CD4-positive, alpha-beta memory T cell (primary cell): ENCODE measurements at regions of chr5 and their contacts with region 1.

Region 1: DNA sequence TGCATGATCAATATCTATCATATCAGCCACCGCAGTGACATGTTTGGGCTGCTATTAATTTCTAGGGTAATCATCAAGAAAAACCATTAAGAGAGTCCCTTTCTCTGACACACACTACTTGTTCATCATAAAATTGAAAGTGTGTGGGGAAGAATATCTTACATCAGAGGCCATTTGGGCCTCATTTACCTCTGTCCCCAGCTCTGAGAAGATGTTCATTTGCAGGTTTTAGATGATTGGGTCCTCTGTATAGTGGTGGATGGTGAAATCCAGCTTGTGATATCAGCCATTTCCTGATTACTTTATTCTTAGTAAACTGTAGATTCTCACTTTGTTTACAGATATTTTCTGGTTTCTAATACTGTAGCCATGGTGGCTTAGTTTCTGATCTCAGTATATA is 29.8 kb upstream of the PJA2 start:
- DNase-seq: no peak
- H3K4me3 ChIP-seq: no peak overlapping the region
- H3K4me3 Mint-ChIP-seq: no peak overlapping the region
- H3K27ac ChIP-seq: no peak overlapping the region
- H3K27ac Mint-ChIP-seq: no peak overlapping the region
- H3K4me1 ChIP-seq: no peaks in the 10 kb centered on the region
- H3K4me1 Mint-ChIP-seq: no peaks in the 10 kb centered on the region
- H3K27me3 ChIP-seq: no peaks in the 10 kb centered on the region
- H3K27me3 Mint-ChIP-seq: no peaks in the 10 kb centered on the region

Region 2: DNA sequence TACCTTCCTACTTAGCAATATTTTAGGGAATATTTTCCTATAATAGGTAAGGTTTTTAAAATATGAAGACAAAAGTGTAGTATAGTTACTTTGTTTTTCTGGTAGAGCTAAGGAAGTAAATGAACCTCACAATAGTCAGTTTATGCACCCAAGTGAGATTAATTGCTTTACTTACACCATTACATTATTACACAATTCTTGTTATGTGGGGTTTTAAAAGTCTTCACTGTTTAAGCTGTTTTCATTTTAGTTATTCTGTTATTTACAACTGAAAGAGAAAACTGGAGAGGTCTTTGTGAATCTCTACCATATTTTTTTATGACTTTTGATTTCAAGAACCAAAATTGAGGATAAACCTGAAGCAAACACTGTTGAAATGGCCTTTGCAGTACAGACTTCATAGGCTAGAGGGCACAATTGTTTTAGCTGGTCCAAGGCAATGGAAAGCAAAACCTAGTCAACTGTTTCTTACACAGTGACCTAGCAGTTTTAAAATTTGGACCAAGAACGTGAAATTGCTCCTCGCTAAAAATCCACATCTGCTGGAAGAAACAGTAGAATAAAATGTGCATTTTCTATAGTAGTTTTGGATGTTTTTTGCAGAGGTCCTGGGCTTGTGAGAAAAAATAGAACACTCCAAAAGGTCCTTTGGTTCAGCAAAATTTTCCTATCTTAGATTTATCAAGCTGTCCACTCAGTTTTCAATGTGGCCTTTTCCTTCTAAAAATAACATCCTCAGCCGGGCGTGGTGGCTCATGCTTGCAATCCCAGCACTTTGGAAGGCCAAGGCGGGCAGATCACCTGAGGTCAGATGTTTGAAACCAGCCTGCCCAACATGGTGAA is 758.3 kb before region 1 on chr5:
- CTCF ChIA-PET with region 1: no interaction called
- POLR2A ChIA-PET with region 1: no interaction called
- intact Hi-C with region 1: loop called (anchors 1 kb)
- DNase-seq: peak; percentile 27 to 47 (median 43)
- H3K4me3 ChIP-seq: no peak overlapping the region
- H3K4me3 Mint-ChIP-seq: no peak overlapping the region
- H3K27ac ChIP-seq: no peak overlapping the region
- H3K27ac Mint-ChIP-seq: no peak overlapping the region
- H3K4me1 ChIP-seq: no peaks in the 10 kb centered on the region
- H3K4me1 Mint-ChIP-seq: no peaks in the 10 kb centered on the region
- H3K27me3 ChIP-seq: no peaks in the 10 kb centered on the region
- H3K27me3 Mint-ChIP-seq: peaks cover 4 to 11% of the 10 kb centered on the region in 2 donors

Region 3: GRCh38 chr5:109053995-109054417 is 385.6 kb before region 1 on chr5:
- CTCF ChIA-PET with region 1: no interaction called
- POLR2A ChIA-PET with region 1: no interaction called
- intact Hi-C with region 1: loop called (anchors 10 kb)
- DNase-seq: no peak
- H3K4me3 ChIP-seq: no peak overlapping the region
- H3K4me3 Mint-ChIP-seq: no peak overlapping the region
- H3K27ac ChIP-seq: no peak overlapping the region
- H3K27ac Mint-ChIP-seq: peak overlapping the region in 1 of 7 donors; percentile 3
- H3K4me1 ChIP-seq: no peaks in the 10 kb centered on the region
- H3K4me1 Mint-ChIP-seq: peaks cover 0 to 1% (median 0%) of the 10 kb centered on the region in 4 donors
- H3K27me3 ChIP-seq: no peaks in the 10 kb centered on the region
- H3K27me3 Mint-ChIP-seq: no peaks in the 10 kb centered on the region

Region 4: DNA sequence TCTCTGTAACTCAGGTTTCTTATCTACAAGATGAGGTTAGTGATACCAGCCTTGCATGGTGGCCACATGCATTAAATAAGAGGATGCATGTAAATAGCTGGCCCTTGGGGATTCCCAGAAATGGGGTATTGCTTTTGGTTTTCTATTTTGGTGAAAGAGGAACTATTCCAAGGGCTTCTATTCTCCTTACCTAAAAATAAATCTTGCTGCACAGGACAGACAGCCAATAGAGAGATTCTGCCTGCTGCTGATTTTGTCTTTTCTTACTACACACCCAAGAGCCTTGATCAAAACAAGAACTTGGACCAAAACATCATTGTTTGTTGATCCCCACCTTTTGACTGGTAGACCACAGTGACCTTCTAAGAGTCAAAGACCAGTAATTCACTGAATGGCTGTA is 191.6 kb before region 1 on chr5:
- CTCF ChIA-PET with region 1: no interaction called
- POLR2A ChIA-PET with region 1: no interaction called
- intact Hi-C with region 1: no loop called
- DNase-seq: no peak
- H3K4me3 ChIP-seq: no peak overlapping the region
- H3K4me3 Mint-ChIP-seq: no peak overlapping the region
- H3K27ac ChIP-seq: no peak overlapping the region
- H3K27ac Mint-ChIP-seq: no peak overlapping the region
- H3K4me1 ChIP-seq: no peaks in the 10 kb centered on the region
- H3K4me1 Mint-ChIP-seq: peaks cover 0 to 2% (median 0%) of the 10 kb centered on the region in 4 donors
- H3K27me3 ChIP-seq: no peaks in the 10 kb centered on the region
- H3K27me3 Mint-ChIP-seq: peaks cover 0 to 3% of the 10 kb centered on the region in 2 donors

Region 5: GRCh38 chr5:109374625-109375024 is 65.0 kb before region 1 on chr5:
- CTCF ChIA-PET with region 1: interaction called, 4 read pairs
- POLR2A ChIA-PET with region 1: no interaction called
- intact Hi-C with region 1: loop called (anchors 1 kb)
- DNase-seq: peak in 1 of 5 donors; percentile 2
- H3K4me3 ChIP-seq: no peak overlapping the region
- H3K4me3 Mint-ChIP-seq: no peak overlapping the region
- H3K27ac ChIP-seq: no peak overlapping the region
- H3K27ac Mint-ChIP-seq: peak overlapping the region in 1 of 7 donors; percentile 13
- H3K4me1 ChIP-seq: peaks cover 15% of the 10 kb centered on the region
- H3K4me1 Mint-ChIP-seq: peaks cover 38 to 69% (median 55%) of the 10 kb centered on the region in 4 donors
- H3K27me3 ChIP-seq: no peaks in the 10 kb centered on the region
- H3K27me3 Mint-ChIP-seq: no peaks in the 10 kb centered on the region

Region 6: DNA sequence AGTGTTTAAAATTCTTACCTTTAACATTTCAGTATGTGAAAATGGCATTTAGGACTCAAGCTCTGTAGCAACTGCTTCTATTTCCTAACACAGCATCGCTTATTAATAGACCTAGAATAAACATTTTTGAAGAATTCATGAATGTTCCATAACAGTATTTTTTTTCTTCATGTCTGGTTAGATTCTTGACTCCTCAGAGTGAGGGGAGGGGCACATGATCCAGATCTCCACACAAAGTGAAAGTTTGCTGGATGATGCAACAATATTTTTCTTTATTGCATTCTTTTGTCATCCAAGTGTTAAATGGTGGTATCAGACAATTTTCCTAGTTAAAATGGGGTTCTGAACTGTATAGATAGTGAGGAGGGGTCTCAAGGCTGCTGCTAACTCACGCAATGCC is 119.4 kb after region 1 on chr5:
- CTCF ChIA-PET with region 1: no interaction called
- POLR2A ChIA-PET with region 1: no interaction called
- intact Hi-C with region 1: no loop called
- DNase-seq: no peak
- H3K4me3 ChIP-seq: no peak overlapping the region
- H3K4me3 Mint-ChIP-seq: no peak overlapping the region
- H3K27ac ChIP-seq: no peak overlapping the region
- H3K27ac Mint-ChIP-seq: no peak overlapping the region
- H3K4me1 ChIP-seq: no peaks in the 10 kb centered on the region
- H3K4me1 Mint-ChIP-seq: peaks cover 10 to 12% (median 11%) of the 10 kb centered on the region in 4 donors
- H3K27me3 ChIP-seq: no peaks in the 10 kb centered on the region
- H3K27me3 Mint-ChIP-seq: peaks cover 0 to 3% of the 10 kb centered on the region in 2 donors

Region 7: DNA sequence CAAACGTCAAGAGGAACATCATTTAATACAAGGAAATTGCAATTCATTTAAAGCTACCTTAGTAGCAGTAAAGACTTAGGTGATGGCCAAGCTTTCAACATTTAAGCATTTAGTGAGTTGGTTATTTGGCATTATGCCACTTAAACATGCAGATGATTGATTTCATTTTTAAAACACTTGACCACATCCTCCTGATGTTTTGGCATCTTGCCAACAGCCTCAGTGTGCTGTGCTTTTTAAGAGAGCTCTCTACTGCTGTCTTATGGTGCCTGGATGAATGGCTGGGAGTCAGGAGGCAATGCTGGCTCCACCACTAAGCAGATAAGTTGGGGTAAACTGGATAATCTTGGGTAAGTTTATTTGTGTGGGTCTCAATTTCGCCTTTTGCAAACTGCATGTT is 614.6 kb after region 1 on chr5:
- CTCF ChIA-PET with region 1: no interaction called
- POLR2A ChIA-PET with region 1: no interaction called
- intact Hi-C with region 1: no loop called
- DNase-seq: peak; percentile 84 to 88 (median 86)
- H3K4me3 ChIP-seq: no peak overlapping the region
- H3K4me3 Mint-ChIP-seq: peak overlapping the region; percentile 25 to 82 (median 64)
- H3K27ac ChIP-seq: peak overlapping the region; percentile 18
- H3K27ac Mint-ChIP-seq: peak overlapping the region; percentile 59 to 96 (median 94)
- H3K4me1 ChIP-seq: peaks cover 33% of the 10 kb centered on the region
- H3K4me1 Mint-ChIP-seq: peaks cover 25 to 36% (median 31%) of the 10 kb centered on the region in 4 donors
- H3K27me3 ChIP-seq: no peaks in the 10 kb centered on the region
- H3K27me3 Mint-ChIP-seq: peaks cover 0 to 2% of the 10 kb centered on the region in 2 donors